A673 (cell line): ENCODE measurements at regions of chr1 and their contacts with region 1.

Region 1: GRCh38 chr1:220943319-220943996 is 64.2 kb downstream of the HLX start:
- DNase-seq: no peak
- H3K4me3 ChIP-seq: no peak overlapping the region
- H3K27ac ChIP-seq: no peak overlapping the region
- H3K4me1 ChIP-seq: no peaks in the 10 kb centered on the region
- H3K27me3 ChIP-seq: no peaks in the 10 kb centered on the region
- CTCF ChIP-seq: no peak

Region 2: GRCh38 chr1:221100611-221101010 is 157.2 kb after region 1 on chr1:
- CTCF ChIA-PET with region 1: interaction called, 10 read pairs
- POLR2A ChIA-PET with region 1: no interaction called
- intact Hi-C with region 1: no loop called
- DNase-seq: no peak
- H3K4me3 ChIP-seq: no peak overlapping the region
- H3K27ac ChIP-seq: no peak overlapping the region
- H3K4me1 ChIP-seq: no peaks in the 10 kb centered on the region
- H3K27me3 ChIP-seq: no peaks in the 10 kb centered on the region
- CTCF ChIP-seq: no peak

Region 3: DNA sequence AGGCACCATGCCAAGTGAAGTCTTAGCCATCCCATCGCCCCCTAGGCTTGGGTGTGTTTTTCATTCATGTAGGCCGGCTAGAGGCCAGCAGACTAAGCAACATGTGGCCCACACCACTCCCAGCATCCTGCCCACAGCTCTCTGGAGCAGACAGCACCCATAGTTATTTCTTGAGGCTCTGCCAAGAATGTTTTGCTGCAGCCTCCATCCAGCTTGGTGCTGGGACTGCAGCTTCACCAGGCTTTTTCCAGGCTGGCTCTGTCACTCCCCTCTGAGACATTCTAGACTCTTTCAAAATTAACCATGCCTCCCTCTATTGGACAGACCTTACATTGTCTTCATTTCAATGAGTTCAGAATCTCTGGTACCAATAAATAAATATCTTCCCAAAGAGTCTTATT is 694.2 kb after region 1 on chr1:
- CTCF ChIA-PET with region 1: no interaction called
- POLR2A ChIA-PET with region 1: no interaction called
- intact Hi-C with region 1: no loop called
- DNase-seq: no peak
- H3K4me3 ChIP-seq: no peak overlapping the region
- H3K27ac ChIP-seq: no peak overlapping the region
- H3K4me1 ChIP-seq: no peaks in the 10 kb centered on the region
- H3K27me3 ChIP-seq: no peaks in the 10 kb centered on the region
- CTCF ChIP-seq: no peak